ENCODE measurements at regions of chr6 and their contacts with region 1.

Region 1: DNA sequence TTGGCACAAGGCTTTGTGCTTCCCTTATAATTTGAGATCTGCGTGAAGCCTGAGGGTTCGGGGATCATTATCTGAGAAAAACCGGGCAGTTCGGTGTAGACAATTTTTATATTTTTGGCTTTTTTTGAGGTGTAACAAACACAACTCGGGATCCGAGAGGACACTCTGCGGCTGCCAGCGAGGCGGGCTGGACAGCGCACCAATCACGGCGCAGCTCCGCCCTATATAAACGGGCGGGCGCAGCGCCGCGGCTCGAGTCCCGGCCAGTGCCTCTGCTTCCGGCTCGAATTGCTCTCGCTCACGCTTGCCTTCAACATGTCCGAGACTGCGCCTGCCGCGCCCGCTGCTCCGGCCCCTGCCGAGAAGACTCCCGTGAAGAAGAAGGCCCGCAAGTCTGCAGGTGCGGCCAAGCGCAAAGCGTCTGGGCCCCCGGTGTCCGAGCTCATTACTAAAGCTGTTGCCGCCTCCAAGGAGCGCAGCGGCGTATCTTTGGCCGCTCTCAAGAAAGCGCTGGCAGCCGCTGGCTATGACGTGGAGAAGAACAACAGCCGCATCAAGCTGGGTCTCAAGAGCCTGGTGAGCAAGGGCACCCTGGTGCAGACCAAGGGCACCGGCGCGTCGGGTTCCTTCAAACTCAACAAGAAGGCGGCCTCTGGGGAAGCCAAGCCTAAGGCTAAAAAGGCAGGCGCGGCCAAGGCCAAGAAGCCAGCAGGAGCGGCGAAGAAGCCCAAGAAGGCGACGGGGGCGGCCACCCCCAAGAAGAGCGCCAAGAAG is 69.0 kb downstream of the HFE start:
- H3K4me3 ChIP-seq: peak overlapping the region; percentile 71
- H3K27ac ChIP-seq: peak overlapping the region; percentile 48; the same call in 1 of the 2 replicates
- H3K4me1 ChIP-seq: no peaks in the 10 kb centered on the region
- CTCF ChIP-seq: peak; percentile 41; the same call in 1 of the 2 replicates

Region 2: DNA sequence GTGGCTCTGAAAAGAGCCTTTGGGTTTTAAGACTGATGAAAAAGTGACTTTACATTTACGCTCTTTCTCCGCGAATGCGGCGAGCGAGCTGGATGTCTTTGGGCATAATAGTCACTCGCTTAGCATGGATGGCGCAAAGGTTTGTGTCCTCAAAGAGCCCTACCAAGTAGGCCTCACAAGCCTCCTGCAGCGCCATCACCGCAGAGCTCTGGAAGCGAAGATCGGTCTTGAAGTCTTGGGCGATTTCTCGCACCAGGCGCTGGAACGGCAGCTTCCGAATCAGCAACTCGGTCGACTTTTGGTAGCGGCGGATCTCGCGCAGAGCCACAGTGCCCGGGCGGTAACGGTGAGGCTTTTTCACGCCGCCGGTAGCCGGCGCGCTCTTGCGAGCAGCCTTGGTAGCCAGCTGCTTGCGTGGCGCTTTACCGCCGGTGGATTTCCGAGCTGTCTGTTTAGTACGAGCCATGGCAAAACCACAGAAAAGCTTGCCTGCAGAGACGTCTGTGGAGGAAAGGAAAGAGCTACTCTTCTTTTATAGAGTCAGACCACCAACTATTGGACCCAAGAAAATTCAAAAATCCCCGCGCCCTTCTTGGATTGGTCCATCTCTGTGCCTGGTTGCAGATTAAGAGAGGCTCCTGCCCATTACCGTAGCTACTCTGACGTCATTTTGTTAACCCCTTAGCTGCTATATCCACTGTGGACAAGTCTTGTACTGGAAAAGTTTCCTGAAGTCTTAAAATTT is 124.5 kb before region 1 on chr6:
- CTCF ChIA-PET with region 1: no interaction called
- POLR2A ChIA-PET with region 1: interaction called, 71 read pairs
- H3K4me3 ChIP-seq: peak overlapping the region; percentile 71
- H3K27ac ChIP-seq: peak overlapping the region; percentile 63
- H3K4me1 ChIP-seq: peaks cover 12% of the 10 kb centered on the region
- CTCF ChIP-seq: peak; percentile 85

Region 3: GRCh38 chr6:26087284-26088115 is 68.8 kb before region 1 on chr6 and contains the start of gene HFE:
- CTCF ChIA-PET with region 1: no interaction called
- POLR2A ChIA-PET with region 1: no interaction called
- H3K4me3 ChIP-seq: peak within 1 kb of the TSS; percentile 38
- H3K27ac ChIP-seq: no peak within 1 kb of the TSS
- H3K4me1 ChIP-seq: no peaks in the 10 kb centered on the region
- CTCF ChIP-seq: 0 out of 2 replicates have a peak, but pooled peaks have one; percentile 24

Region 4: DNA sequence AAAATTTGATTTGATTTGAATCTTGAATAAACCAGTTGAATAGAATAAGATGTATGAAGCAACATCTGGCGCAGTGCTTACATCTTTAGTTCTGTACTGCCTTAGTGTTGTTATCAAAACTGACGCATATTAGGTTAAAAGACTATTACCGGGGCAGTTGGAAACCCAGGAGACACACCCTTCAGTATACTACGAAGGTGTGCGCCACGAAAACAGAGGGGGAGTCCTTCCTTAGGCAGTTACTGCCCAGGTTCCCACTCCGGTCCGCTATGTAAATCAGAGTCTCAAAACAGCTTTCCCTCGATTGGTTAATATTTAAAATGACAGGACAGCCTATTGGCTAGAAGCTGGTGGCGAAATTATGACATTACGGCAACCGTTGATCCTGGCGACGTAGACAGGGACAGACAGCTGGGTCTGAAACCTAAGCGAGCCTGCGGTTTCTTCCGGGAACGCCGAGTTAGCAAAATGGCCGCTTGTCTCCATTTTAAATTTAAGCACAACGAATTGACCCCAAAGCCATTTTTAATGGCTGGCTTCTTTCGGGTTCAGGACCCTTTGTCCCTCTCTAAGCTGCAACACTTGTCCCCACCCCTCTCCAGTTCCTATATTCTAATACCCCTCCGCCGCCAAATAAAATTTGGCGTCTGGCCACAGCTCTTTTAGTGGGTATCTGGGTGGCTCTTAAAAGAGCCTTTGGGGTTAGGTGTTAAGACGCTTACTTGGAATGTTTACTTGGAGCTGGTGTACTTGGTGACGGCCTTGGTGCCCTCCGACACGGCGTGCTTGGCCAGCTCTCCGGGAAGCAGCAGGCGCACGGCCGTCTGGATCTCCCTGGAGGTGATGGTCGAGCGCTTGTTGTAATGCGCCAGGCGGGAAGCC is 33.2 kb before region 1 on chr6:
- CTCF ChIA-PET with region 1: interaction called, 6 read pairs
- POLR2A ChIA-PET with region 1: interaction called, 439 read pairs
- H3K4me3 ChIP-seq: peak overlapping the region; percentile 50
- H3K27ac ChIP-seq: peak overlapping the region; percentile 60
- H3K4me1 ChIP-seq: no peaks in the 10 kb centered on the region
- CTCF ChIP-seq: no peak

Region 5: DNA sequence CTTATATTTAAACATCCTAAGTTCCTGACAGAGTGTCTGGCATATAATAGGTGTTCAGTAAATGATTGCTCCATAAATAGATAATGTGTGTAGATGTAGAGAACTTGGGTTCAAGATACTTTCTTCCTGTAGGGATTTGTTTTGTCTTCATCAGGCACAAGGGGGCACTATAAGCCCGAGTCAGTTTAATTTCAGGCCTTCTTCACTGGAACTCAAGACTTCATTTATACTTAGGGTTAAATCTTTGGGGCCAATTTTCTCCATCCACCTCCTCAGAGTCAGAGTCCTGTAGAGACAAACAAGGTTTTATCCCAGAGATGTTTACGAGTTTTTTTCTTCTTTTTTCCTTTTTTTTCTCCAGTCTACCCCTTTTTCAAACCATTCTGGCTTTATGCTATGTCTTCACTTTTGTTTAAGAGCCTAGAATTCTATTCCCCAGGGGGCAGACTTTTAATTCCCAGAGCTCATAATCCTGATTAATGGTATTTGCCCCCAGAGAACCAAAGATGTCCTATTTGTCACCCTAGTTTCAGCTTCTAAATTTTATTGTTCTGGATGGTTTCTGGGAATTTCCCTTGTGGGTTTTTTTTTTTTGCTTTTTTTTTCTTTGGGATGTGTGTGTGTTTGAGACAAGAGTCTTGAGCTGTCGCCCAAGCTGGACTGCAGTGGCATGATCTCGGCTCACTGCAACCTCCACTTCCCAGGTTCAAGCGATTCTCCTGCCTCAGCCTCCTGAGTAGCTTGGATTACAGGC is 19.3 kb after region 1 on chr6:
- CTCF ChIA-PET with region 1: interaction called, 3 read pairs
- POLR2A ChIA-PET with region 1: interaction called, 18 read pairs
- H3K4me3 ChIP-seq: no peak overlapping the region
- H3K27ac ChIP-seq: no peak overlapping the region
- H3K4me1 ChIP-seq: no peaks in the 10 kb centered on the region; the same call in 1 of the 2 replicates
- CTCF ChIP-seq: peak; percentile 39; the same call in 1 of the 2 replicates

Region 6: DNA sequence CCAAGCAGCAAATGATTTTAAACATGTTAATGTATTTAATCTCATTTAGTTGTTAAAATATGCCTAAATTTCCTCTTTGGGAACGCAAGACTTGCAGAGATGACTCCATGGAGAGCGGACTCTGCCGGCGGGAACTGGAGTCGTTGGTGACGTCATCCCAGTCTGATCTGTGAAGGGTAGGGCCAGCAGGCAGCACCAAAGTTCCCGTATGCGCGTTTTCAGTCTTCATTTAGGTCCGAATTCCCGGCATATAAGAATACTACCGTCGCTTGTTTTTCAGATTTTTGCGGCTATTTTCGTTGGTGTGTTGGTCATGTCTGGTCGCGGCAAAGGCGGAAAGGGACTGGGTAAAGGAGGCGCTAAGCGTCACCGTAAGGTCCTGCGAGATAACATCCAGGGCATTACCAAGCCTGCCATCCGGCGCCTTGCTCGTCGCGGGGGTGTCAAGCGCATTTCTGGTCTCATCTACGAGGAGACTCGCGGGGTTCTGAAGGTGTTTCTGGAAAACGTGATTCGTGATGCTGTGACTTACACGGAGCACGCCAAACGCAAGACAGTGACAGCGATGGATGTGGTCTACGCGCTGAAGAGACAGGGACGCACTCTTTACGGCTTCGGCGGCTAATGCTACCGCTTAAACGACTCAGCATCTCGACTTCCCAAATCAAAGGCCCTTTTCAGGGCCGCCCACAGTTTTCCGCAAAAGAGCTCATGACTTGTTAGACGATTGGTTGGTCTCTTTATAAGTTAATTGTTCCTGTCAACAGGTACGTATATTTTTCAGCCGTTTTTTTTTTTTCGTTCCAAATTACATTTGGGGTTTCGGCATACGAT is 48.3 kb after region 1 on chr6:
- CTCF ChIA-PET with region 1: no interaction called
- POLR2A ChIA-PET with region 1: interaction called, 40 read pairs
- H3K4me3 ChIP-seq: peak overlapping the region; percentile 73
- H3K27ac ChIP-seq: peak overlapping the region; percentile 71
- H3K4me1 ChIP-seq: no peaks in the 10 kb centered on the region
- CTCF ChIP-seq: peak; percentile 81

Region 7: DNA sequence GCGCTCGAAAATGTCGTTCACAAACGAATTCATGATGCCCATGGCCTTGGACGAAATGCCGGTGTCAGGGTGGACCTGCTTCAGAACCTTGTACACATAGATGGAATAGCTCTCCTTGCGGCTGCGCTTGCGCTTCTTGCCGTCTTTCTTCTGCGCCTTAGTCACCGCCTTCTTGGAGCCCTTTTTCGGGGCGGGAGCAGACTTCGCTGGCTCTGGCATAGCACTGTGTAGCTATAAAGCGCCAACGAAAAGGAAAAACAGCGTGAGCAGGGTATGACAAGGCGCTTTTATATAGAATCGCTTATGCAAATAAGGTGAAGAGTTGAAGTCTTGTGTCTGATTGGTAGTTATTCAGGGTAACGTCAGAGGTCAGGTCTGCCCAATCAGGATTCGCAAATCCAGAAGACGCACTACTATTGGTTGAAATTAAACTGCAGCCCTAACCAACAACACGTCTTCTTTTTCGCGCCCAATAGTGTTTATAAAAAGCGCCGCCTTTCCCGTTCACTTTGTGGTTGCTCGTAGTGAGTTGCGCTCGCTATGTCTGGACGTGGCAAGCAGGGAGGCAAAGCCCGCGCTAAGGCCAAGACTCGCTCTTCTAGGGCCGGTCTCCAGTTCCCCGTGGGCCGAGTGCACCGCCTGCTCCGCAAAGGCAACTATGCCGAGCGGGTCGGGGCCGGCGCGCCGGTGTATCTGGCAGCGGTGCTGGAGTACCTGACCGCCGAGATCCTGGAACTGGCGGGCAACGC is 976.4 kb after region 1 on chr6:
- CTCF ChIA-PET with region 1: no interaction called
- POLR2A ChIA-PET with region 1: interaction called, 11 read pairs
- H3K4me3 ChIP-seq: peak overlapping the region; percentile 71
- H3K27ac ChIP-seq: peak overlapping the region; percentile 95
- H3K4me1 ChIP-seq: peaks cover 10% of the 10 kb centered on the region
- CTCF ChIP-seq: no peak

Measured in HEK293 (cell line).